MCF 10A (cell line): ENCODE measurements at regions of chr2 and their contacts with region 1.

Region 1: DNA sequence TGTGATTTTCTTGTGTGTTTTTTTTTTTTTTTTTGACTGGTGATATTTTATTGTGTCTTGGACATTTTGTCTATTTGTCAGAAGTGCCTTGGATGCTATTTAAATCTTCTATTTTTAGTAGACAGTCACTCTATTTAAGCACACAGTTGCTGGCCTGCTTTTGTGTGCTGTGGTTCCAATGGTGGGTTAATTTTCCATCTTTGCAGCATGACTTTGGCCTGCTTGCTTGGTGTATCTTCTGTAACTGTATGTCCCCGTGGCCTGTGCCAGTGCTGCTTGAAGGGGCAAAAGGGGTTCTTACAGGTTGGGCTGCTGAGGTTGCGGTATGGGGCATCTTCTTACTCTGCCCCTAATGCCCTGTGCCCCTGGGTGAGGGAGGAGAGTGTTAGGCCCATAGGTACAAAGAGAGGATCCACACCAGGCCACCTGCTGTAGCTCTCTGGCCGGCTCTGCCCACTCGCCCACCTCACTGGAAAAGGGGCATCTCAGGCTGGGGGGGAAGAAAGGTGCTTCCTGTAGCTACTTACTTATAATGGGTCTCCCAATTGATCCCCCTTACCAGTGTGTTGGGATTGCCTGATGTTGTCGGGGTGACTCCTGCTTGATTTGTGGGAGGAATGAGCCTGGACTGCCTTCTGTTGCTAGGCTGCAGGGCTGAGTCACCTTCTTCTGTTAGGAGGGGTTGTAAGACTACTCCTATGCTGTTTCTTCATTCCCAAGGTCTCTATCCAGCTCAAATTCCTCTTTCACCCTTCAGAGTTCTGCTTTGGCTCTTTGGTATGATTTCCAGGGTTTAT is 490.0 kb upstream of the HS6ST1 start:
- DNase-seq: peak; percentile 54
- H3K4me3 Mint-ChIP-seq: no peak overlapping the region
- H3K27ac Mint-ChIP-seq: peak overlapping the region; percentile 87
- H3K4me1 Mint-ChIP-seq: peaks cover 36% of the 10 kb centered on the region
- H3K27me3 Mint-ChIP-seq: no peaks in the 10 kb centered on the region
- CTCF ChIP-seq: no peak

Region 2: GRCh38 chr2:128736689-128737545 is 71.7 kb before region 1 on chr2:
- CTCF ChIA-PET with region 1: interaction called, 5 read pairs
- POLR2A ChIA-PET with region 1: interaction called, 4 read pairs
- intact Hi-C with region 1: loop called (anchors 2 kb)
- DNase-seq: peak; percentile 66
- H3K4me3 Mint-ChIP-seq: peak overlapping the region; percentile 56
- H3K27ac Mint-ChIP-seq: no peak overlapping the region
- H3K4me1 Mint-ChIP-seq: peaks cover 18% of the 10 kb centered on the region
- H3K27me3 Mint-ChIP-seq: no peaks in the 10 kb centered on the region
- CTCF ChIP-seq: peak; percentile 99

Region 3: GRCh38 chr2:128775217-128775913 is 33.3 kb before region 1 on chr2:
- CTCF ChIA-PET with region 1: no interaction called
- POLR2A ChIA-PET with region 1: no interaction called
- intact Hi-C with region 1: no loop called
- DNase-seq: no peak
- H3K4me3 Mint-ChIP-seq: no peak overlapping the region
- H3K27ac Mint-ChIP-seq: no peak overlapping the region
- H3K4me1 Mint-ChIP-seq: no peaks in the 10 kb centered on the region
- H3K27me3 Mint-ChIP-seq: no peaks in the 10 kb centered on the region
- CTCF ChIP-seq: no peak

Region 4: GRCh38 chr2:128868686-128869551 is 60.3 kb after region 1 on chr2:
- CTCF ChIA-PET with region 1: interaction called, 5 read pairs
- POLR2A ChIA-PET with region 1: interaction called, 5 read pairs
- intact Hi-C with region 1: loop called (anchors 5 kb)
- DNase-seq: peak; percentile 39
- H3K4me3 Mint-ChIP-seq: no peak overlapping the region
- H3K27ac Mint-ChIP-seq: no peak overlapping the region
- H3K4me1 Mint-ChIP-seq: no peaks in the 10 kb centered on the region
- H3K27me3 Mint-ChIP-seq: no peaks in the 10 kb centered on the region
- CTCF ChIP-seq: no peak

Region 5: GRCh38 chr2:129056295-129056953 is 247.8 kb after region 1 on chr2:
- CTCF ChIA-PET with region 1: interaction called, 3 read pairs
- POLR2A ChIA-PET with region 1: interaction called, 5 read pairs
- intact Hi-C with region 1: loop called (anchors 5 kb)
- DNase-seq: peak; percentile 99
- H3K4me3 Mint-ChIP-seq: peak overlapping the region; percentile 13
- H3K27ac Mint-ChIP-seq: peak overlapping the region; percentile 79
- H3K4me1 Mint-ChIP-seq: peaks cover 32% of the 10 kb centered on the region
- H3K27me3 Mint-ChIP-seq: no peaks in the 10 kb centered on the region
- CTCF ChIP-seq: no peak